A549 (cell line): ENCODE measurements at regions of chr3 and their contacts with region 1.

Region 1: GRCh38 chr3:63818281-63819150 is 583 bp upstream of the C3orf49 start:
- DNase-seq: peak; percentile 17 to 33
- ATAC-seq: peak; percentile 59 to 85; a peak in 4 of 6 replicates
- H3K4me3 ChIP-seq: no peak overlapping the region
- H3K27ac ChIP-seq: no peak overlapping the region
- H3K4me1 ChIP-seq: no peaks in the 10 kb centered on the region
- CTCF ChIP-seq: peak; percentile 71
- EP300 ChIP-seq: no peak
- POLR2A ChIP-seq: no peak
- RAD21 ChIP-seq: peak; percentile 68 to 73

Region 2: DNA sequence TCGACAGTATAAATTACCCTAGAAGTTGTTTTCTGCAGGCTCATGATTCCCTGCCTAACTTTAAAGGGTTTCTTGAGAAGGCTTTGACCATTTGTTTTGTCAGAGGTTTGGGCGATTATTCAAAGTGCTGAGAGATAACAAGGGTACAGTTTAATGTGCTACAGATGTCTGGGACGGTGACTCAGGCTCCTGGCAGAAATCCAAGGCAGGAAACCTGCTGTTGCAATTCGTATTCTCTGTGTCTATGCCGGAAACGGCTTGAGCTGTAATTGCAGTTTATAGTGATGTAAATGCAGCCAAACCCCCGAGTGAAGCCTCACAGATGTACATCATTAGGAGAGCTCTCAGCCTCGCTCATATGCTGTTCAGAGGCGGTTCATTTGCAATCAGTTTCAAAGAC is 474.8 kb before region 1 on chr3:
- CTCF ChIA-PET with region 1: interaction called, 115 read pairs
- POLR2A ChIA-PET with region 1: no interaction called
- DNase-seq: peak in 1 of 2 experiments; percentile 40
- ATAC-seq: peak; percentile 57 to 90; a peak in 5 of 6 replicates
- H3K4me3 ChIP-seq: no peak overlapping the region
- H3K27ac ChIP-seq: no peak overlapping the region
- H3K4me1 ChIP-seq: 0 out of 3 replicates have a peak, but pooled peaks cover 3% of the 10 kb centered on the region
- CTCF ChIP-seq: no peak
- EP300 ChIP-seq: no peak
- POLR2A ChIP-seq: no peak
- RAD21 ChIP-seq: no peak

Region 3: DNA sequence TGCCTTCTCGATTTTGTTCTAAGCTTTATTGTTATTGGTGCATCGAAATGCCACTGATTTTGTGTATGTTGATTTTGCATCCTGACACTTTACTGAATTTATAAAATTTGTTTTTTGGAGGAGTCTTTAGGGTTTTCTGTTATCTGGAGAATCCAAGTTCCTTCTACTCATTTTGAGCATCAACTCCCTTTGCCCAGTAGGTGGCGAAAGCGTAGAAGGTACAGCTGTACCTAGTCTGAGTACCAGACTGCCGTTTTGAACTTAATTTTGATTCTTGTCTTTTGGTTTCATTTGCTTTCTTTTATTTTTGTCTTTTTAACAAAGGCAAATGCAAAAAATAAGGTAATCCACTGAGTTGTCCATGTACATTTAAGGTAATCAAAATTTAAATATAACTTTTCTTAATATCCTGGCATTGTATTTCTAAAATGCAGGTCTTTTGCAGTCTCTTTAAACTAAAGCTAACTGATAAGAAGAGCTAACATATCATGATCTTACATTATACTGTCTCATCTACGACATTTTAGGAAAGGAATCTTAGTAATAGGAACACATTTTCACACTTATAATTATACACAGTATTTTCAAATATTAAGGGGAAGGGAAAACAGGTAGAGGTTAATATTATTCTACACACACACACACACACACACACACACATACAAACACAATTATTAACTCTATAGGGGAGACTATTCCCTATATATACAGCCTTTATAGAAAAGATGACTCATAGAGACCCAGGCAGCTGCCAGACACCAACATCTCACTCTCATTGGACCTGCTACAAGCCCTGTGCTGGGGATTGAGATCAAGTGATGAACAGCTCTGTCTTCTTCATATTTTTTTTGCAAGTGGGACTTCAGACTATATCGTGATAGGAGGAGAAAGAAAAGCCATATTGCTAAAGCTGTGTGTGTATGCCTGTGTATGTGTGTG is 468.7 kb before region 1 on chr3:
- CTCF ChIA-PET with region 1: interaction called, 115 read pairs
- POLR2A ChIA-PET with region 1: no interaction called
- DNase-seq: peak; percentile 5 to 49
- ATAC-seq: peak; percentile 74 to 86; a peak in 4 of 6 replicates
- H3K4me3 ChIP-seq: no peak overlapping the region
- H3K27ac ChIP-seq: no peak overlapping the region
- H3K4me1 ChIP-seq: no peaks in the 10 kb centered on the region
- CTCF ChIP-seq: peak; percentile 65
- EP300 ChIP-seq: no peak
- POLR2A ChIP-seq: no peak
- RAD21 ChIP-seq: peak; percentile 59 to 63

Region 4: GRCh38 chr3:63588895-63589294 is 229.6 kb before region 1 on chr3:
- CTCF ChIA-PET with region 1: no interaction called
- POLR2A ChIA-PET with region 1: no interaction called
- DNase-seq: peak in 1 of 2 experiments; percentile 1
- ATAC-seq: no peak
- H3K4me3 ChIP-seq: no peak overlapping the region
- H3K27ac ChIP-seq: no peak overlapping the region
- H3K4me1 ChIP-seq: no peaks in the 10 kb centered on the region
- CTCF ChIP-seq: no peak
- EP300 ChIP-seq: no peak
- POLR2A ChIP-seq: no peak
- RAD21 ChIP-seq: no peak

Region 5: DNA sequence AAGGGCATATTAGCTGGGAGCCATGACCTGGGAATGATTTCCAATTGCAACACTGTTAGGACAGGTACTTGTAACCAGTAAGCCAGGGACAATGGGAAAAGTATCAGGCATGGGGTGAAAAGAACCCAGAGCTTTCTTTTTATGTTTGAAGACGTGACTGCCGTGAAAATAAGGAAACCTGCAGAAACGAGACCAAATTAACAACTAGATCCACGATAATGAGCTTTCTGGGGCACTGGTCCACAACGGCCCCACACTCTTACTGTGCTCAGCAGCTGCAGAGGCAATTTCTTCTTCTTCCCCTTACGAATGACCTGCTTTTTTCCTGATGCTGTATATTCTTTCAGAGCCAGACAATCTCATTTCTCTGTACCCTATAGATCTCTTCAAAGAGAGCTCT is 12.0 kb after region 1 on chr3:
- CTCF ChIA-PET with region 1: interaction called, 17 read pairs
- POLR2A ChIA-PET with region 1: no interaction called
- DNase-seq: no peak
- ATAC-seq: no peak
- H3K4me3 ChIP-seq: no peak overlapping the region
- H3K27ac ChIP-seq: no peak overlapping the region
- H3K4me1 ChIP-seq: no peaks in the 10 kb centered on the region
- CTCF ChIP-seq: no peak
- EP300 ChIP-seq: no peak
- POLR2A ChIP-seq: no peak
- RAD21 ChIP-seq: no peak

Region 6: GRCh38 chr3:64011685-64012084 is 193.2 kb after region 1 on chr3:
- CTCF ChIA-PET with region 1: no interaction called
- POLR2A ChIA-PET with region 1: no interaction called
- DNase-seq: no peak
- ATAC-seq: peak in 1 of 2 experiments; percentile 36; a peak in 1 of 6 replicates
- H3K4me3 ChIP-seq: no peak overlapping the region
- H3K27ac ChIP-seq: no peak overlapping the region
- H3K4me1 ChIP-seq: peaks cover 7% of the 10 kb centered on the region; the same call in 1 of the 3 replicates
- CTCF ChIP-seq: no peak
- EP300 ChIP-seq: no peak
- POLR2A ChIP-seq: no peak
- RAD21 ChIP-seq: no peak